ENCODE measurements at regions of chr12 and their contacts with region 1.

Region 1: GRCh38 chr12:50025187-50026059 is at the start of gene RACGAP1:
- DNase-seq: peak; percentile 95 to 98 (median 98)
- H3K4me3 ChIP-seq: peak within 1 kb of the TSS; percentile 48 to 62
- H3K4me3 Mint-ChIP-seq: peak within 1 kb of the TSS; percentile 95 to 100 (median 99)
- H3K27ac ChIP-seq: peak within 1 kb of the TSS; percentile 68
- H3K27ac Mint-ChIP-seq: peak within 1 kb of the TSS; percentile 79 to 97 (median 97)
- H3K4me1 ChIP-seq: peaks cover 10% of the 10 kb centered on the region
- H3K4me1 Mint-ChIP-seq: peaks cover 16 to 18% (median 17%) of the 10 kb centered on the region in 4 donors
- H3K27me3 ChIP-seq: no peaks in the 10 kb centered on the region
- H3K27me3 Mint-ChIP-seq: peaks cover 4 to 5% of the 10 kb centered on the region in 2 donors
- total RNA-seq, gene RACGAP1: 8.5 to 10.4 TPM

Region 2: GRCh38 chr12:48716493-48717251 is 1308.8 kb before region 1 on chr12 and contains the start of gene CCNT1:
- CTCF ChIA-PET with region 1: no interaction called
- POLR2A ChIA-PET with region 1: no interaction called
- intact Hi-C with region 1: loop called (anchors 2 kb)
- DNase-seq: peak; percentile 98 to 100 (median 100)
- H3K4me3 ChIP-seq: peak within 1 kb of the TSS; percentile 87 to 98
- H3K4me3 Mint-ChIP-seq: peak within 1 kb of the TSS; percentile 89 to 99 (median 94)
- H3K27ac ChIP-seq: peak within 1 kb of the TSS; percentile 98
- H3K27ac Mint-ChIP-seq: peak within 1 kb of the TSS; percentile 90 to 100 (median 97)
- H3K4me1 ChIP-seq: peaks cover 40% of the 10 kb centered on the region
- H3K4me1 Mint-ChIP-seq: peaks cover 25 to 51% (median 37%) of the 10 kb centered on the region in 4 donors
- H3K27me3 ChIP-seq: no peaks in the 10 kb centered on the region
- H3K27me3 Mint-ChIP-seq: no peaks in the 10 kb centered on the region
- total RNA-seq, gene CCNT1: 67.0 to 69.5 TPM

Region 3: GRCh38 chr12:49623142-49623904 is 402.1 kb before region 1 on chr12 and contains the start of gene PRPF40B:
- CTCF ChIA-PET with region 1: no interaction called
- POLR2A ChIA-PET with region 1: no interaction called
- intact Hi-C with region 1: no loop called
- DNase-seq: peak; percentile 88 to 90 (median 89)
- H3K4me3 ChIP-seq: peak within 1 kb of the TSS; percentile 73 to 94
- H3K4me3 Mint-ChIP-seq: peak within 1 kb of the TSS; percentile 87 to 93 (median 90)
- H3K27ac ChIP-seq: peak within 1 kb of the TSS; percentile 65
- H3K27ac Mint-ChIP-seq: peak within 1 kb of the TSS; percentile 93 to 98 (median 94)
- H3K4me1 ChIP-seq: peaks cover 22% of the 10 kb centered on the region
- H3K4me1 Mint-ChIP-seq: peaks cover 15 to 42% (median 21%) of the 10 kb centered on the region in 4 donors
- H3K27me3 ChIP-seq: no peaks in the 10 kb centered on the region
- H3K27me3 Mint-ChIP-seq: no peaks in the 10 kb centered on the region
- total RNA-seq, gene PRPF40B: 15.1 to 15.9 TPM

Region 4: GRCh38 chr12:49959570-49960465 is 65.6 kb before region 1 on chr12:
- CTCF ChIA-PET with region 1: no interaction called
- POLR2A ChIA-PET with region 1: no interaction called
- intact Hi-C with region 1: no loop called
- DNase-seq: no peak
- H3K4me3 ChIP-seq: no peak overlapping the region
- H3K4me3 Mint-ChIP-seq: peak overlapping the region in 6 of 8 donors; percentile 41 to 78 (median 60)
- H3K27ac ChIP-seq: no peak overlapping the region
- H3K27ac Mint-ChIP-seq: no peak overlapping the region
- H3K4me1 ChIP-seq: no peaks in the 10 kb centered on the region
- H3K4me1 Mint-ChIP-seq: peaks cover 6 to 13% (median 7%) of the 10 kb centered on the region in 4 donors
- H3K27me3 ChIP-seq: peaks cover 20% of the 10 kb centered on the region
- H3K27me3 Mint-ChIP-seq: peaks cover 53 to 66% of the 10 kb centered on the region in 2 donors

Region 5: GRCh38 chr12:50006789-50007436 is 18.5 kb before region 1 on chr12:
- CTCF ChIA-PET with region 1: no interaction called
- POLR2A ChIA-PET with region 1: interaction called, 10 read pairs
- intact Hi-C with region 1: no loop called
- DNase-seq: no peak
- H3K4me3 ChIP-seq: no peak overlapping the region
- H3K4me3 Mint-ChIP-seq: peak overlapping the region in 2 of 8 donors; percentile 9 to 44
- H3K27ac ChIP-seq: no peak overlapping the region
- H3K27ac Mint-ChIP-seq: peak overlapping the region in 6 of 7 donors; percentile 5 to 77 (median 66)
- H3K4me1 ChIP-seq: peaks cover 4% of the 10 kb centered on the region
- H3K4me1 Mint-ChIP-seq: peaks cover 4 to 23% (median 14%) of the 10 kb centered on the region in 4 donors
- H3K27me3 ChIP-seq: no peaks in the 10 kb centered on the region
- H3K27me3 Mint-ChIP-seq: no peaks in the 10 kb centered on the region

Region 6: DNA sequence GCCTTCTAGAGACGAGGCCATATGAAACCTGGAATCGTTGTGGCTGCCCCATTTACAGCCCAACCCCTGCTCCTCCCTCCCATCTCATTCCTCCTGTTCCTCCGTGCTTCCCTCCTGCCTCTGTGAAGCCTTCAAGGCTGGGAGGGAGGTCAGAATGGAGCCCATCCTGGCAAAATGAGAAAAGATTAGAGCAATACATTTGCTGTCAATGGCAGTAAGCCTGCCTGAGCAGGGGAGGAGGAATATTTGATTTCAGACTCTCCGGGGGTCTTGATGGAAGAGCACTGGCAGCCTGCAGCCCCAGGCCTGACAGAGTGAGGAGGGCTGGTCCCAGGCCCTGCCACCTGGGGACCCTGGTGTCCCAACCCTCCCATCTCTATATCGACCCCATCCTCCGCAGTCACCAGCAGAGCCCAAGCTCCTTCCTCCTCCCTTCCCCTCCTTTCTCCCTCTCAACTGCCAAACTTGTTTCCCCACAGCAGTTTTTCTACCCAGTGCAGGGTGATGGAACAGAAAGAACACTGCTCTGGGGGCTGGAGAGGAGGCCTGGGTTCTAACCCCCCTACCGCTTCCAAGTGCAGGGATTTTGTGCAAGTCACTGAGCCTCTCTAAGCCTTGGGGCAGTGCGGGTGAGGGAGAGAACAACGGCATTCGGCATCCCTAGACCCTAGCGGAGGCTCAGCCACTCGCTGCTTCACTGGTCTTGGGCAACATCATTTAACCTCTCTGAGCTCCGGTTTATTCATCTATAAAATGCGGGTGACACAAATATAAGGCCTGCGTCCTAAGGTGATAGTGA is 15.8 kb after region 1 on chr12:
- CTCF ChIA-PET with region 1: interaction called, 22 read pairs
- POLR2A ChIA-PET with region 1: interaction called, 5 read pairs
- intact Hi-C with region 1: no loop called
- DNase-seq: no peak
- H3K4me3 ChIP-seq: no peak overlapping the region
- H3K4me3 Mint-ChIP-seq: no peak overlapping the region
- H3K27ac ChIP-seq: no peak overlapping the region
- H3K27ac Mint-ChIP-seq: no peak overlapping the region
- H3K4me1 ChIP-seq: no peaks in the 10 kb centered on the region
- H3K4me1 Mint-ChIP-seq: peaks cover 0 to 1% (median 0%) of the 10 kb centered on the region in 4 donors
- H3K27me3 ChIP-seq: no peaks in the 10 kb centered on the region
- H3K27me3 Mint-ChIP-seq: peaks cover 2 to 4% of the 10 kb centered on the region in 2 donors

Region 7: DNA sequence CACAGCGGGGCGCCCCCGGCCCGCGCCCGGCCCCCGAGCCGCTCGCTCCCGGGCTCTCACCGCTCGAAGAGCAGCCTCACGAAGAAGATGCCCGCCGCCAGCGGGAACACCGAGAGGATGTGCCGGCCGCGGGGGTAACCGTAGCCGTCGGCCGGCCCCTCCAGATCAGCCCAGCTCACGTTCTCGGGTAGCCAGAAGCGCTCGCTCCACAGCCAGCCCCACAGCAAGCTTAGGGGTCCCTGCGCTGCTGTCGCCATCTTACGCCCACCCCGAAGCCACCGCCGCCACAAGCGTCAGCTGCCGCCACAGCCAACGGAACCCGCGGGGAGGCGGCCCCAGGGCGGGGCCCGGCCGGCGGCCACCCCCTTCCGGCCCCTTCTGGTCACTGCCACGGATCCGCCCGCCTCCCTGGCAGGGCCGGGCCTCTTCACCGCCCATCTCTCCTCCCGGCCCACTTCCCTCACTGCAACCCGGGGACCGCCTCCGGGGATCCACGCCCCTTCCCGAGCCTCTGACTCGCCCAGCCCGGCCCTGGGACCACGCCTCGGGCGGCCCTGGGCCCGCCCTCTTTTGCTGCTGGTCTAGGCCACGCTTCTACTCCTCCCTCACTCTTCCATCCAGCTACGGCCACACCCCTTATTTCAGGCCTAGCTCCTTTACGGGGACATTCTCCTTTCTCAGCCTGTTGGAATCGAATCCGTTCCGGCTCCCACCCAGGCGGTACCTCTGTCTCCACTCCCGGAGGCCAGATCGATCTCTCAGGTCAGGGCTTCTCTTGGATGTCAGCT is 141.8 kb after region 1 on chr12 and contains the start of gene CERS5:
- CTCF ChIA-PET with region 1: interaction called, 3 read pairs
- POLR2A ChIA-PET with region 1: no interaction called
- intact Hi-C with region 1: loop called (anchors 2 kb)
- DNase-seq: peak; percentile 97 to 98 (median 97)
- H3K4me3 ChIP-seq: peak within 1 kb of the TSS; percentile 72 to 81
- H3K4me3 Mint-ChIP-seq: peak within 1 kb of the TSS; percentile 93 to 96 (median 94)
- H3K27ac ChIP-seq: peak within 1 kb of the TSS; percentile 90
- H3K27ac Mint-ChIP-seq: peak within 1 kb of the TSS; percentile 88 to 98 (median 96)
- H3K4me1 ChIP-seq: peaks cover 30% of the 10 kb centered on the region
- H3K4me1 Mint-ChIP-seq: peaks cover 19 to 34% (median 26%) of the 10 kb centered on the region in 4 donors
- H3K27me3 ChIP-seq: no peaks in the 10 kb centered on the region
- H3K27me3 Mint-ChIP-seq: no peaks in the 10 kb centered on the region
- total RNA-seq, gene CERS5: 42.1 to 48.2 TPM

Measured in CD4-positive, alpha-beta memory T cell (primary cell).